GM23248 (cell line): ENCODE measurements at regions of chr7 and their contacts with region 1.

Region 1: GRCh38 chr7:13262929-13263530 is 575.6 kb downstream of the ARL4A start:
- DNase-seq: peak; percentile 63
- H3K4me3 ChIP-seq: no peak overlapping the region
- H3K27ac ChIP-seq: no peak overlapping the region
- H3K4me1 ChIP-seq: no peaks in the 10 kb centered on the region
- H3K27me3 ChIP-seq: peaks cover 7% of the 10 kb centered on the region; the same call in 1 of the 2 replicates

Region 2: DNA sequence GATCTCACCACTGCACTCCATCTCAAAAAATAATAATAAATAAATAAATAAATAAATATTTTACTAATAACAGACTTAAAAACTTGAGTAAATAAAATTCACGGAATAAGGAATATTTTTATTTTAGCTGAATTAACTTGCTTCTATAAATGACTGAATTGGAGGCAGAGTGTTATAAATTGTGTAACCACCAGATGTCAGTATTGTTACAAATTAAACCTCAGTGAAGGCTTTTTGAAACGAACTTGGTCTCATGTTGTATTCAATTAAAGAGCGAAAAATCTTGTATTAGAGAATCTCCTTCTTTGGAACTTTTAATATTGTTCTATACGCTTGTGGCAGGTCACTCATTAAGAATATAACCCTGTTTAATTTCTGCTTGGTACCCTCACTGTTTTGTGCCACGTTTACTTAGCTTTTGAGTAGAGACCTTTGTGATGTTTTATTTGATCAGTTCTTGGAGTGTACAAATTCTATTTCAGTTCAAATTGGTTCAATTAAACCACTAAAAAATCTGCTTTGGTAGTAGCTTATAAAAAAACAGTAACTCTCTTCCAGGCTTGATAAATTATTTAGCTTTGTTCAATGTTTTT is 738.1 kb before region 1 on chr7:
- in situ Hi-C with region 1: loop called (anchors 25 kb)
- DNase-seq: peak; percentile 64
- H3K4me3 ChIP-seq: no peak overlapping the region
- H3K27ac ChIP-seq: no peak overlapping the region
- H3K4me1 ChIP-seq: no peaks in the 10 kb centered on the region
- H3K27me3 ChIP-seq: peaks cover 28% of the 10 kb centered on the region

Region 3: DNA sequence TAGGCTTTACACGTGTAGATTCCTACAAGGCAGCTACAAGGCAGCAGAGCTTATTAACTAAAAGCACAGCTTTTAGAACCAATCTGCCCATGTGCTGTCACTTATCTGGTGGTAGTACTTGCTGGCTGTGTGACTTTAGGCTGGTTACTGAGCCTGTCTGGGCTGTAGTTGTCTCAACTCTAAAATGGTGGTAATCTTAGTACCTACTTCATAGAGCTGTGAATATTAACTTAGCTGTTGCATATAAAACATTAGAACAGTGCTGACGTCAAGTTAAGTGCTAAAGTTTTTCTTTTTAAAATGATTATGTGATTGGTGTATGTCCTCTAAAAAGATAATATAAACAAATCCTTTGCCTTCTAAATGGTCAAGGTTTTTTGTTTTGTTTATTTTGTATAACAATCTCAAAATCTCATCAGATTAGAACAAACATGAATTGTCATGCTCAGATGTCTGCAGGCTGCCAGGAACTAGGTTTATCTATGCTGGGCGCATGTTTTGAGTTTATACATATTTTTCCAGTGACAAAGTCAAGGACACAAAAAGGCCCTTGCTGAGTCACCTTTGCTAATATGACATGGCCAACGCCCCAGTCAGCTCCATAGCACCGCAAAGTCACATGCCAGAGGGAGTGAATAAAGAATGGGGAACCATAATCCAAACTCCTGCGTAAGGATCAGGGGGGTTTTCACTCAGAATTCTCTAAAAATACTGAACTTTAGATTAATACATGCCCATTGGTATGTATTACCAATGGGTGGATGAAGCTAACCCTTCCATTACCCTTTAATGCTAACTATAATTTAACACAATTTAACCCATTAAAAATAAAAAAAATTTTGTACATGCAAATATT is 615.4 kb before region 1 on chr7:
- in situ Hi-C with region 1: loop called (anchors 10 kb)
- DNase-seq: peak; percentile 87
- H3K4me3 ChIP-seq: no peak overlapping the region
- H3K27ac ChIP-seq: peak overlapping the region; percentile 3
- H3K4me1 ChIP-seq: peaks cover 19% of the 10 kb centered on the region
- H3K27me3 ChIP-seq: no peaks in the 10 kb centered on the region

Region 4: DNA sequence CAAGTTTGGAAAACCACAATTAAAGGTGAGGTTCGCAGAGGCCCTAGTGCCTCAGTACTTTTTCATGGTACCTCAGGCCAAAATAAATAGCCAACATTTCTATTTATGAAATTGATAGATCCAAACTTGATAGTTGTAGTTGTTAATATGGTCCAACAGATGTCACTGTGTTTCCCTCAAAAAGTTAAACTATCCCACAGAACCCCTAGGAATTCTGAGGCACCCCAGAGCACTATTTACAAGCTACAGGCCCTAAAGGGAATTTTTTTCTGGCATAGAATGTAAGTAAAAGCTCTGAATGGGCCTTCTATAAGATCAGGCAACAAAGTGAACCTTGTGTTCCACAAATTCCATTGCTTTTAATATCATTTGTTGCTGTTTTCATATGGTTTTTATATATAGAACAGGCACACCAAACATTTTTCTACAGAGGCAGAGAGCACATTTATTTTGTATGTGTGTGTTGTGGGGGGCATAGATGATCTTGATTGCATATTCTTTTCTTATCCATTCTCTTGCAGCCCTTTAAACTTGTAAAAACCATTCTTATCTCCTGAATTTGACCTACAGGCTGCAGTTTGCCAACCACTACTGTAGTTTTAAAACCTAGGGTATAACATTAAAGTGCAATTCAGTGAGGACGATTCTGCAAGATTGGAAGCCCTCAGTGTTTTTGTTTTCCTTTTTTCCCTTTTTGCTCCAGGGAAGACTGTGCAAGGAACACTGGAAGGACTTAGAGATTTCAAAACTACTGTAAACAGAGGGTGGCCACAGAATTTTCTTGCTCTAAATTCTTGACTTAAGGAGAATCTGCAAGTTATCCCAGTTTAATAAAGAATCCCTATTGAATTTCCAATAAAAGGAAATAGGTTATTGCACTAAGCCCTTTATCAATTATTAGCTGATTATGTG is 579.1 kb before region 1 on chr7:
- in situ Hi-C with region 1: loop called (anchors 5 kb)
- DNase-seq: peak; percentile 44
- H3K4me3 ChIP-seq: no peak overlapping the region
- H3K27ac ChIP-seq: no peak overlapping the region
- H3K4me1 ChIP-seq: 0 out of 2 replicates have a peak, but pooled peaks cover under 1% of the 10 kb centered on the region
- H3K27me3 ChIP-seq: no peaks in the 10 kb centered on the region